CD4-positive, alpha-beta memory T cell (primary cell): ENCODE measurements at regions of chr5 and their contacts with region 1.

Region 1: DNA sequence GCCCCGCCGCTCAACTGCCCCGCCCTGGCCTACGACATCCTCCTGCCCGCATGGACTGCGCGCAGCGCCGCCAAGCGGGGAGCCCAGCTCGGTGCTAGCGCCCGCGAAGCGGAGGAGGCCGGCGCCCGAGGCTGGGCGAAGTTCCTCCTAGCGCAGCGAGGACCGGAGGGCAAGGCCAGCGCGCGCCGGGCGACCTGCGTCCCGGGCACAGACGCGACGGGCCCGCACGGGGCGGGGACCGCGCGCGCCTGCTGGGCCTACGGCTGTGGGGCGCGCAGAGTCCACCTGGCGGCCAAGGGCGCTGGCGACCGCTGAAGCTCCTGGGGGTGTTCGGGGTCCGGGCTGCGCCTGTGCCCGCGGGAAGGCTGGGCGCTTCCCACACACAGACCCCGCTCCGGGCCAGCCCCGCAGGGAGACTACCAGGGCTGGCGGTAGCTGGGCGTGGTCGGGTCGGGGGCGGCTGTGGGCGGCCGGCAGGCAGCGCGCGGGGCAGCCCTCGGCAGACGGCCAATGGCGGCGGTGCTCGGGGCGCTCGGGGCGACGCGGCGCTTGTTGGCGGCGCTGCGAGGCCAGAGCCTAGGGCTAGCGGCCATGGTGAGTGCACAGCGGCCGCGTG is at the start of gene PCBD2:
- DNase-seq: peak; percentile 90 to 92 (median 91)
- H3K4me3 ChIP-seq: peak within 1 kb of the TSS; percentile 59 to 84
- H3K4me3 Mint-ChIP-seq: peak within 1 kb of the TSS; percentile 94 to 100 (median 97)
- H3K27ac ChIP-seq: peak within 1 kb of the TSS; percentile 85
- H3K27ac Mint-ChIP-seq: peak within 1 kb of the TSS; percentile 97 to 99 (median 99)
- H3K4me1 ChIP-seq: no peaks in the 10 kb centered on the region
- H3K4me1 Mint-ChIP-seq: peaks cover 4 to 9% (median 5%) of the 10 kb centered on the region in 4 donors
- H3K27me3 ChIP-seq: no peaks in the 10 kb centered on the region
- H3K27me3 Mint-ChIP-seq: no peaks in the 10 kb centered on the region
- total RNA-seq, gene PCBD2: 13.1 to 15.6 TPM

Region 2: GRCh38 chr5:134004592-134005375 is 900.0 kb before region 1 on chr5 and contains the start of gene VDAC1:
- CTCF ChIA-PET with region 1: no interaction called
- POLR2A ChIA-PET with region 1: interaction called, 4 read pairs
- intact Hi-C with region 1: loop called (anchors 10 kb)
- DNase-seq: peak; percentile 89 to 95 (median 92)
- H3K4me3 ChIP-seq: peak within 1 kb of the TSS; percentile 61 to 81
- H3K4me3 Mint-ChIP-seq: peak within 1 kb of the TSS; percentile 89 to 99 (median 93)
- H3K27ac ChIP-seq: peak within 1 kb of the TSS; percentile 96
- H3K27ac Mint-ChIP-seq: peak within 1 kb of the TSS; percentile 96 to 99 (median 98)
- H3K4me1 ChIP-seq: peaks cover 49% of the 10 kb centered on the region
- H3K4me1 Mint-ChIP-seq: peaks cover 26 to 50% (median 38%) of the 10 kb centered on the region in 4 donors
- H3K27me3 ChIP-seq: no peaks in the 10 kb centered on the region
- H3K27me3 Mint-ChIP-seq: no peaks in the 10 kb centered on the region
- total RNA-seq, gene VDAC1: 45.1 to 46.4 TPM

Region 3: DNA sequence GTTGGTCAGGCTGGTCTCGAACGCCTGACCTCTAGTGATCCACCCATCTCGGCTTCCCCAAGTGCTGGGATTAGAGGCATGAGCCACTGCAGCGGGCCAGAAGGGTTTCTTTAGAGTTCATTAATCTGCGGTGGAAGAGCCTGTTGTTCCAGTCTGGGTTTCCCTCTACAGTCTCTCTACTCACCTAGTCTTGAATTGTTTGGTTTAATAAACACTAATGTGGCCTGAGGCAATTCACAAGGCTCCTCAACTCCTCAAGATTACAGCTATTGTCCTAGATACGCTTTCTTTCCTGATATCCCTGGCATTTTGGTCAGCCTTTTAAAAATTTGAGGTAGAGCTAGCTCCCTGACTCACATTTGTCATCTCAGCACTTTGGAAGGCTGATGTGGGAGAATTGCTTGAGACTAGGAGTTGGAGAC is 267.6 kb before region 1 on chr5:
- CTCF ChIA-PET with region 1: no interaction called
- POLR2A ChIA-PET with region 1: interaction called, 3 read pairs
- intact Hi-C with region 1: loop called (anchors 5 kb)
- DNase-seq: no peak
- H3K4me3 ChIP-seq: no peak overlapping the region
- H3K4me3 Mint-ChIP-seq: no peak overlapping the region
- H3K27ac ChIP-seq: no peak overlapping the region
- H3K27ac Mint-ChIP-seq: no peak overlapping the region
- H3K4me1 ChIP-seq: peaks cover 4% of the 10 kb centered on the region
- H3K4me1 Mint-ChIP-seq: peaks cover 0 to 13% (median under 1%) of the 10 kb centered on the region in 4 donors
- H3K27me3 ChIP-seq: no peaks in the 10 kb centered on the region
- H3K27me3 Mint-ChIP-seq: no peaks in the 10 kb centered on the region

Region 4: DNA sequence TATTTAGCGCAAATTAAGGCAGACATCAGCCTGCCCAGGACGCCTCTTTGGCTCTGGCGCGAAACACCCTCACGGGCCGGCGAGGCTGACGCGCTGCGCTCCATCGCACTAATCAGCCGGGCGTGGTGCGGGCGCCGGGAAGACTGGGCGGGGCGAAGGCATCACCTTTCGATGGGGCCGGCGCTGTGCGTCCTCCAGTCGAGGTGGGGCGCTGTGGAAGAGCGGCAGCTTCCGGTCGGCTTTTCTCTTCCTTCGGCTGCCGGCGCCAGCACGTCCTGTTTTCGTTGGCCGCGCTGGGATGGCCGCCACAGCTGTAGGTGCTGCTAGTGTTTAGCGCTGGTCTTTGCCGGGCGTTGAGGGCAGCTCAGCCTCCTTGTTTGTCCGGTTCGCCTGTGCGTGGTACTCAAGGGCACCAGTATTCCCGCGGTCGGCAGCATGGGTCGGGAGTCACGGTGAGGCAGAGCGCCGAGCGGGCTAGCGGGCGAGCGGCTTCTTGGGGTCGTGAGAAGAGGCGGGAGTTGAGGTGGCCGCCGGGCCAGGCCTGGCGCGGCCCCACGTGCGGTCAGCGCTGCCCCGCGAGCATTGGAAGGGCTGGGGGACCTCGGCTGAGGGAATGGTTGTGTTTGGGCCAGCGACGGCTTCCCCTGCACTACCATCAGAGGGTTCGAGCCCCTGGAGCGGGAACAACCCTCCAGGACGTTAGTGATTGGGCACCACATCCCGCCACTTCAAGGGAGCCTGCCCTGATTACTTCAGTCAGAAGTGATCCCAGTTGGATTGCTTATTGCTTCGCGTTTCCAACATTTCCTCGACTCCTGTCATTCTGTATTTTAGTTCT is 146.0 kb before region 1 on chr5 and contains the start of gene DDX46:
- CTCF ChIA-PET with region 1: interaction called, 5 read pairs
- POLR2A ChIA-PET with region 1: interaction called, 29 read pairs
- intact Hi-C with region 1: loop called (anchors 1 kb)
- DNase-seq: peak; percentile 92 to 93 (median 92)
- H3K4me3 ChIP-seq: peak within 1 kb of the TSS; percentile 82 to 84
- H3K4me3 Mint-ChIP-seq: peak within 1 kb of the TSS; percentile 99 to 100 (median 100)
- H3K27ac ChIP-seq: peak within 1 kb of the TSS; percentile 83
- H3K27ac Mint-ChIP-seq: peak within 1 kb of the TSS; percentile 86 to 99 (median 98)
- H3K4me1 ChIP-seq: peaks cover 25% of the 10 kb centered on the region
- H3K4me1 Mint-ChIP-seq: peaks cover 28 to 44% (median 38%) of the 10 kb centered on the region in 4 donors
- H3K27me3 ChIP-seq: no peaks in the 10 kb centered on the region
- H3K27me3 Mint-ChIP-seq: no peaks in the 10 kb centered on the region
- total RNA-seq, gene DDX46: 59.9 to 66.8 TPM

Region 5: DNA sequence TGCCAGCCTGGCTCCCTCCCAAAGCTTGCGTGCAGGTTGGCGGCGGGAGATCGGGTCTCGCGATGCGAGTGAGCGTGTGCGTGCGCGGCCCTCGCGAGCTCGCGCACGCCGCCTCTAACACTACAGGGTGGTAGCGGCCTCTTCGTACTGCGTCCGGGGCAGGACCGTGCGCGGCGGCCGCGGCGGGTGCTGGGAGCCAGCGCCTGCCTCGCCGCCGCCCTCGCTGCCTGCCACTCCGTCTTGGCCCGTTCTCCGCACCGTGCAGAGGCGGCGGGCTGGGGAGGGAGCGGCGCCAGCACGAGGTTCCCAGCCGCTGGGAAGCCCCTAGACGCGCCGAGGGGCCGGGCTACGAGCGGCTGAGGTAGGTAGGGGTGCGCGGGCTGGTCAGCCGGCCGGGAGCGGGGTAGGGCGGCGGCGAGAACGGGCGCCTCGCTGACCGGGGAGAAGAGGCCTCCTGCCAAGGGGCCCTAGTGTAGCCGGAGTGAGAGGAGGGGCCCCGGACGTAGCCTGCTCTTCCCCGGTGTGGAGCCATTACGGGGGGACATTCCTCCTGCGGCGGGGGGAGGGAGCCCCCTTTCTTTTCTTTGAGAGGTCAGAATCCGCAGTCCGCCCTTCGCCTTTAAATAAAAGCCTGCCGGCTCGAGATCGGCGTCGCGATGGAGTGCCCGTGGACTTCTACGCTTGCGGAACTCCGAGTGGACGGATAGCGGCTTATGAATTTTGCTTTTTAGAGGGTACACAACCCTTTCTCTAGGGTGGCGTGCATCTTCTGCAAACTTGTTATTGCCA is 58.7 kb before region 1 on chr5 and contains the start of gene C5orf24:
- CTCF ChIA-PET with region 1: interaction called, 21 read pairs
- POLR2A ChIA-PET with region 1: interaction called, 51 read pairs
- intact Hi-C with region 1: loop called (anchors 1 kb)
- DNase-seq: peak; percentile 90 to 93 (median 92)
- H3K4me3 ChIP-seq: peak within 1 kb of the TSS; percentile 59 to 92
- H3K4me3 Mint-ChIP-seq: peak within 1 kb of the TSS; percentile 87 to 96 (median 92)
- H3K27ac ChIP-seq: peak within 1 kb of the TSS; percentile 94
- H3K27ac Mint-ChIP-seq: peak within 1 kb of the TSS; percentile 93 to 99 (median 97)
- H3K4me1 ChIP-seq: peaks cover 29% of the 10 kb centered on the region
- H3K4me1 Mint-ChIP-seq: peaks cover 16 to 42% (median 29%) of the 10 kb centered on the region in 4 donors
- H3K27me3 ChIP-seq: no peaks in the 10 kb centered on the region
- H3K27me3 Mint-ChIP-seq: no peaks in the 10 kb centered on the region
- total RNA-seq, gene C5orf24: 33.4 to 33.9 TPM

Region 6: GRCh38 chr5:134873987-134874830 is 30.5 kb before region 1 on chr5 and contains the start of gene TXNDC15:
- CTCF ChIA-PET with region 1: interaction called, 17 read pairs
- POLR2A ChIA-PET with region 1: interaction called, 45 read pairs
- intact Hi-C with region 1: loop called (anchors 1 kb)
- DNase-seq: peak; percentile 79 to 84 (median 81)
- H3K4me3 ChIP-seq: peak within 1 kb of the TSS; percentile 90 to 91
- H3K4me3 Mint-ChIP-seq: peak within 1 kb of the TSS; percentile 93 to 98 (median 94)
- H3K27ac ChIP-seq: peak within 1 kb of the TSS; percentile 78
- H3K27ac Mint-ChIP-seq: peak within 1 kb of the TSS; percentile 86 to 97 (median 96)
- H3K4me1 ChIP-seq: peaks cover 33% of the 10 kb centered on the region
- H3K4me1 Mint-ChIP-seq: peaks cover 26 to 49% (median 39%) of the 10 kb centered on the region in 4 donors
- H3K27me3 ChIP-seq: no peaks in the 10 kb centered on the region
- H3K27me3 Mint-ChIP-seq: no peaks in the 10 kb centered on the region
- total RNA-seq, gene TXNDC15: 42.8 to 52.0 TPM